Activated CD8-positive, alpha-beta T cell treated with anti-CD3 and anti-CD28 coated beads, Interleukin-2, amount 10 ng/mL, durations not matched to agents 7 days and 5 days (primary cell): ENCODE measurements at regions of chr20 and their contacts with region 1.

Region 1: DNA sequence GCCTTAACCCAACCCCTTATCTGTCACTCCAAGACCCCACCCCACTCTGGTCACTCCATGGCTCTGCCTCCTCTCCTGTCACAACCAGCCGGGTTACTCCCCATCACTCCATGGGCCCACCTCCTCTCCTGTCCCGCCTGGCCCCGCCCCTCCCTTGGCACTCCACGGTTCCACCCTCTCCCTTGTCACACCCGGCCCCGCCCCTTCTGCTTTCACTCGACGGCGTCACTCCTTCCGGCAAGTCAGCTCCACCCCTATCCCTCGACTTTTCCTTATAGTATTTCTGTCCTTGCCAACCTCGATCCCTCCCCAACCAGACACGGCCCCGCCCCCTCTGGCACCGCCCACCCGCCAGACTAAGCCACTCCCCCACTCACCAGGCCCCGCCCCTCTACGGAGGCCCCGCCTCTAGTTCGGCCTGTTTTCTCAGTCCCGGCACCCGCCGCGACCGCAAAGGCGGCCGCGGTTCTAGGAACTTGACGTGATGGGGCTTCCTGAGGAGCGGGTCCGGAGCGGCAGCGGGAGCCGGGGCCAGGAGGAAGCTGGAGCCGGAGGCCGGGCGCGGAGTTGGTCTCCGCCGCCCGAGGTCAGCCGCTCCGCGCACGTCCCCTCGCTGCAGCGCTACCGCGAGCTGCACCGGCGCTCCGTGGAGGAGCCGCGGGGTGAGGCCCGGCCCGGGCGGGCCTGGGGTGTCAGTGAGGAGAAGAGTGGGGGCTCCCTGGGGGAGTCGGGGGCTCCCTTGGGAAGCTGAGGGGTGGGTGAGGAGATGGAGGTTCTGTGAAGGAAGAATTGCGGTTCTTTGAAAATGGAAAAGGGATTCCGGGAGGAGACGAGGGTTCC is at the start of gene ACSS2:
- DNase-seq: peak; percentile 98
- ATAC-seq: peak; percentile 84
- H3K4me3 Mint-ChIP-seq: peak within 1 kb of the TSS; percentile 85
- H3K27ac Mint-ChIP-seq: peak within 1 kb of the TSS; percentile 84
- H3K4me1 Mint-ChIP-seq: peaks cover 54% of the 10 kb centered on the region
- H3K27me3 Mint-ChIP-seq: peaks cover 2% of the 10 kb centered on the region
- total RNA-seq, gene ACSS2: 24.0 to 25.5 TPM

Region 2: DNA sequence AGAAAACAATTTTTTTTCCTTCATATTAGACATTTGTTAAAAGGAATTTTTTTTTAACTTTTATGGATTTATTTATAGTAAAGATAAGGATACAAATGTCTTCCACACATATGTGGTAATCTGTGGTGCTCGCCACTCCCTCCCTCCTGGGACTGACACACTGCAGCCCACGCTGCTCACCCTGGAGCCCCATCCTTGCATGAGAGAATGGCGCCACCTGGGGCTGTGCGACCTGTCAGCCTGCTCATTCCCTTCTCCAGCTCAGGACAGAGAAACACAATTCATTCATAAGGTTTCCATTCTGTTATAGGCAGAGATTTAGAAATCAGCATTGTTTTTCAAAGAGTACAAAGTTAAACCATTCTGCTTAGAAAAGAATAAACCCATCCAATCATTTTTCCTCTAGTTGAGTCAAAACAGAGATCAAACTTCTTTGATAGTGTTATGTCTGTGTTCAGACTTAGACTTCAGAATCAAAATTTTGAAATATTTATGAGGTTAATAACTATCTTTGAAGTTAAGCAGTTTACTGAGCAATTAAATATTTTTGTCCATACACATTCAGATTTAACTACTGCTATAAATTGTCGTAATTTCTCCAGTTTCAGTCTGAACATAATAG is 403.0 kb before region 1 on chr20:
- CTCF ChIA-PET with region 1: no interaction called
- POLR2A ChIA-PET with region 1: no interaction called
- DNase-seq: peak; percentile 52
- ATAC-seq: no peak
- H3K4me3 Mint-ChIP-seq: no peak overlapping the region
- H3K27ac Mint-ChIP-seq: no peak overlapping the region
- H3K4me1 Mint-ChIP-seq: peaks cover 12% of the 10 kb centered on the region
- H3K27me3 Mint-ChIP-seq: no peaks in the 10 kb centered on the region

Region 3: GRCh38 chr20:34861386-34862084 is 14.8 kb before region 1 on chr20:
- CTCF ChIA-PET with region 1: interaction called, 16 read pairs
- POLR2A ChIA-PET with region 1: interaction called, 4 read pairs
- DNase-seq: no peak
- ATAC-seq: no peak
- H3K4me3 Mint-ChIP-seq: no peak overlapping the region
- H3K27ac Mint-ChIP-seq: no peak overlapping the region
- H3K4me1 Mint-ChIP-seq: no peaks in the 10 kb centered on the region
- H3K27me3 Mint-ChIP-seq: no peaks in the 10 kb centered on the region

Region 4: DNA sequence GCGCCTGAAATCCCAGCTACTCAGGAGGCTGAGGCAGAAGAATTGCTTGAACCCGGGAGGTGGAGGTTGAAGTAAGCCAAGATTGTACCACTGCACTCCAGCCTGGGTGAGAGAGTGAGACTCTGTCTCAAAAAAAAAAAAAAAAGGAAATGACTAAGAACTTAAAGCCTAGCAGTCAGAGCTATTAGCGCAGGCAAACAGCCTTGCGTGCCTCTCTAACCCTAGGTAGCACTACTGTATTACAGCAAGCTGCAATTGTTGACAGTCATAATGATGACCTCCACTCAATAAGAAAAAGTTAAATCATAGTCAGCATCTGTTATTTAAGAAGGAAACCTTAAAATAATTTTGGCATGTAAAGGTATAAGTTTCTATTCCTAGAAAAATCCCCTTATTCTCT is 64.8 kb after region 1 on chr20:
- CTCF ChIA-PET with region 1: interaction called, 10 read pairs
- POLR2A ChIA-PET with region 1: interaction called, 4 read pairs
- DNase-seq: no peak
- ATAC-seq: no peak
- H3K4me3 Mint-ChIP-seq: no peak overlapping the region
- H3K27ac Mint-ChIP-seq: no peak overlapping the region
- H3K4me1 Mint-ChIP-seq: no peaks in the 10 kb centered on the region
- H3K27me3 Mint-ChIP-seq: no peaks in the 10 kb centered on the region

Region 5: GRCh38 chr20:34955232-34956040 is 79.1 kb after region 1 on chr20 and contains the starts of genes GSS and MYH7B:
- CTCF ChIA-PET with region 1: interaction called, 129 read pairs
- POLR2A ChIA-PET with region 1: interaction called, 7 read pairs
- DNase-seq: peak; percentile 97
- ATAC-seq: peak; percentile 98
- H3K4me3 Mint-ChIP-seq: peak within 1 kb of the TSS; percentile 98
- H3K27ac Mint-ChIP-seq: peak within 1 kb of the TSS; percentile 93
- H3K4me1 Mint-ChIP-seq: peaks cover 27% of the 10 kb centered on the region
- H3K27me3 Mint-ChIP-seq: no peaks in the 10 kb centered on the region
- total RNA-seq, gene GSS: 55.1 to 55.6 TPM
- total RNA-seq, gene MYH7B: 0.13 to 0.26 TPM

Region 6: DNA sequence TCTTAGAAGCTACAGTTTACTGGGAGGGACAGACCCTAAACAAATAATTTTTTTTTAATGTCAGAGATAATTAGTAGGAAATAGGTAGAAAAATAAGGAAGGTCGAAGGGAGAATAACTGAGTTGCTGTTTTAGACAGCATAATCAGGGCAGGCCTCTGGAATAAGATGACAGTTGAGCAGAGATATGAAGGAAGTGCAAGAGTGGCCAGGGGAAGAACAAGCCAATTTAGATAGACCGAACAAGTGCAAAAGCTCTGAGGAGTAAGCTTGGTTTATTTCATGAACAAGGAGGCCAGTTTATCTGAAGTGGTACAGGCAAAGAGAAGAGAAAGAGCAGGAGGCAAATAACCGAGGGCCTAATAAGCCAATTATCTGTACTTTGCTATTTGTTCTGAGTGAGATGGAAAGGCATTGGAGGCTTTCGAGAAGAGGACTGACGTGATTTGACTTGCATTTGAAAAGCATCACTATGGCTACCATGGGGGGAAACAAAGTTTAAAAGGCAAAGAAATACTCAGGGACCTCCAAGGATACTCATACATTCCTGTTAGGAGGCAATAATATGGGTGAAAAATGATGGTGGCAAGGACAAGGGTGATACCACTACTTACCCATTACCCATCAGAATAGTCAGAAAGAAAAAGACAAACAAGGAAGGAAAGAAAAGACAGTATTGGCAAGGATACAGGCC is 315.2 kb after region 1 on chr20:
- CTCF ChIA-PET with region 1: no interaction called
- POLR2A ChIA-PET with region 1: no interaction called
- DNase-seq: no peak
- ATAC-seq: no peak
- H3K4me3 Mint-ChIP-seq: no peak overlapping the region
- H3K27ac Mint-ChIP-seq: no peak overlapping the region
- H3K4me1 Mint-ChIP-seq: no peaks in the 10 kb centered on the region
- H3K27me3 Mint-ChIP-seq: peaks cover 3% of the 10 kb centered on the region